ENCODE measurements at regions of chr9 and their contacts with region 1.

Region 1: DNA sequence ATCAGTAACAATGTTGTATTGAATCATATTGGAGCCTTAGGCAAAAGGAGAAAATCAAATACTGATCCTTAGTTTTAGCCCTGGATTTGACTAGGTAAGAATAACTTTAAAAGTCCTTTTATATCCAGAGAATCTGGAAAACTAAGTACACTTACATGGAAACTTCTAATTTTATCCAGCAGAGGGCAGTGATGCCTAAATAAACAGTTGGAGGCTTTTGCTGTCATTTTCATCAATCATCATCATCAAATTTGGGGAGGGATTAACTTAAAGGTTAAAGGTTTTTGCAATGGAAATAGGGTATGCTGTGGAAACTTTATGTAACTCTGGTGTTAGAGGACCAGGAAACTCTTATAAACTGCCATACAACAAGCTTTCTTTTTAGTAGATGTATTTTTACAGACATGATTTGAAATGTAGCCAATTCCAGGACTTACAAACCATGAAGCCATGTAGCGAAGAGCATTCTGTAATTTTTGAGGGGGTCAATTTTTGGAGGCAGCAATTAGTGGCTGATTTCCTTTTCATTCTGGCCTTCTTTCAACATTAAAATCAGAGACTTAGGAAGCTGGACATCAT is 112.7 kb downstream of the OSTF1 start:
- H3K4me3 ChIP-seq: no peak overlapping the region
- H3K27ac ChIP-seq: no peak overlapping the region
- H3K4me1 ChIP-seq: no peaks in the 10 kb centered on the region
- CTCF ChIP-seq: no peak

Region 2: DNA sequence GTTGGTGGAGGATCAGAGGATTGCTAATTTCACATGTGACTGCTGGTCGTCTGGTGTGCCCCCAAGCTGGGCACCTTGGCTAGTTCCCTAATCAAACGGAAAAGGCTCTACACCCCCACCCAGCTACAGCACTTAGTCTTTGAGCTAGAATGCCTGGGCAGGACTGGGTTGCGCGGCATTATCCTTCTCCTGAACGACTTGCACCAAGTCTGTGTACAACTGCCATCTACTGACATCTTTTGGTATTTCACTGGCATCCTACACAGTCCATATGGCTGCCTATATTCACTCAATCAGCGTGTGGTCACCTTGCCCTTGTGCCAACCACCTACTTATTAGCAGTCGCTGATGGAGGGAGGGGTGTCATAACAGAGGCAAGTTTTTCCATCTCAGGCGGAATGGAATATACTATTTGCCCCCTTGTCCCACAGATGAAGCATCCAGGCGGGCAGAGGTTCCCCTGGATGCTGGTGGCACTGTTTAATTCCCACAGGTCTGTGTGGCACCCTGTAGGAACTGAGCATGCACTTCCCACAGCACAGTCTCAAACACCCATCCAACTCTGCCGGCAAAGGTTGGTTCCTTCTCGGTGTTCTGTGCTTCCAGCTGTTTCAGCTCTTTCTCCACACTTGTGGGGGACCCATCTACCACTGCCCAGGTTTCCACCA is 37.5 kb after region 1 on chr9:
- CTCF ChIA-PET with region 1: interaction called, 20 read pairs
- POLR2A ChIA-PET with region 1: no interaction called
- H3K4me3 ChIP-seq: no peak overlapping the region
- H3K27ac ChIP-seq: no peak overlapping the region
- H3K4me1 ChIP-seq: no peaks in the 10 kb centered on the region
- CTCF ChIP-seq: no peak